Posterior vena cava (tissue), 2 donors: ENCODE measurements at regions of chr4 and their contacts with region 1.

Region 1: GRCh38 chr4:151325111-151325948 is at the start of gene SH3D19:
- DNase-seq: peak; percentile 85
- total RNA-seq, gene SH3D19: 118 to 140 TPM

Region 2: GRCh38 chr4:151284534-151285245 is 40.6 kb before region 1 on chr4:
- intact Hi-C with region 1: loop called in 1 of 2 experiments (anchors 5 kb)
- DNase-seq: no peak

Region 3: DNA sequence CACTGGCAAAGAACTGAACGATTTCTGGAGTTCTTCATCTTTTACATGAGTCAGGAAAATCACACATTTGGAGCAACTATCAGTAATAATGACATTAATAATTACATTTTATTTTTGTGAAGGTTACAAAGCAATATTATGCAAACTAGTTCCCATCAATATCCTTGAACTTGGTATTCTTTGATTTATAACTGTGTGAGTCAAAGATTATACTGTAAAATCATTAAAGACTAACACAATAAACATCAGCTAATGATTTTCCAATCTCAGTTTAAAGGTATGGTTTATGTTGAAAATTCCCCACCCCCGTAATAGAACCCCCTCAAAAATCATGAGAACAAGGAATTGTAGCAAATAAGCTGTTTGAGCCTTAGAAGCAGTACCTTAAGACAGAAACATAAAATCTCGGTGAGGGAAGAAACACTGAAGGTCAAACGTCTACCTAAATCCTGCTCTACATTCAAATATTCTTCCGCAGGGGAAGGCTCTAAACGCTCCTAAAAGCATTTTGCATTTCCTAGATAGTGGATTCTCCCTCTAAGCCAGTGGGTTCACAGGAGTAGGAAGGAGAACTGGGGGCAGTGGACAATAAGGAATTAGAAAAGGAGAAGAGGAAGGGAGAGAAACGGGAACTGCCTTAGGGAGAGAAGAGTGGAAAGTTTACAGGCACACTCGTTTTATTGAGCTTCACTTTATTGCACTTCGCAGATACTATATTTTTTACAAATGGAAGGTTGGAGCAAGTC is 22.3 kb after region 1 on chr4:
- intact Hi-C with region 1: no loop called
- DNase-seq: no peak

Region 4: DNA sequence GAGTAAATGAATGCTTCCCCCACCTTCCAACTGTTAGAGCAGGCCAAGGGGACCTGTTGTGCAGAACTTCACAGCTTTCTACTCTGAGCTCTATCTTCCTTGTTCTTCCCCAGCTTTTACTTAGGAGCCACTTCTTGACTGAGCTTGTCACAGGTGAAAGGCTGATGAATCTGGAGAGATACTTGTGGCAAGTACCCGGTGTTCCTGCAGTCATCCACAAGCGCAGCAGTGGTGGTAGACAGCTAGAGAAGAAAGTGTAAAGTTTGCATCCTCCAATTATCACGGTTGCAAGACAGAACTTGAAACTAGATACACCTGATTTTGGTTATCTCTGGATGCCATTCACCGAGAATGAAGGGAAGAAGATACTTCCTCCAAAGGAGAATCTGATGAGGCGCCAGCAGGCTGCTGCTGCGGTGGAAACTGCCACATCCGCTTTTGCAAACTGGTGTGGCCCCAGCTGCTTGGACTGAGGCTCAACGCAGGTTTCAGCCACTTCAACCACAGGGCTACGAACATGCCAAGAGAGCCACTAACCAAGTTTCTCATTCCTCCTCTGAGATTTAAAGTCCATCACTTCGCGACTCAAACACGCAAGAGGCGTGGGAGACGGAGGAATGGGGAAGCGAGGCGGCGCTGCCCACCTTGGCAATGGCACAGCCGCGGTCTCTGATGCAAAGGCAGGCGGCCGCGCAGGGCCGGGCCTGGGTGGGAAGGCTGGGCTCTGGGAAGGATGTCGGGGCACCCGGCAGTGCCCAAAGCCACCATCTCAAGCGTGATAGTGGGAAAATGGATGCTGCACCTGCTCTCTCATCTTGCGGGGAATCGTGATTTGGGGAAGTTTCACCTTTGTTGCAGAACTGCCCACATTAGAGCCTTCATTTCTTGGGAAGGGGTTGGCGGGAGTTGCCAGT is 82.4 kb after region 1 on chr4:
- intact Hi-C with region 1: no loop called
- DNase-seq: no peak

Region 5: GRCh38 chr4:151887031-151887815 is 561.9 kb after region 1 on chr4:
- intact Hi-C with region 1: no loop called
- DNase-seq: no peak

Region 6: GRCh38 chr4:152220201-152220666 is 894.9 kb after region 1 on chr4:
- intact Hi-C with region 1: no loop called
- DNase-seq: no peak